ENCODE measurements at regions of chr5 and their contacts with region 1.

Region 1: GRCh38 chr5:172454358-172455086 is at the start of gene SH3PXD2B:
- DNase-seq: peak; percentile 62
- ATAC-seq: peak; percentile 64
- H3K4me3 Mint-ChIP-seq: peak within 1 kb of the TSS; percentile 69
- H3K27ac Mint-ChIP-seq: peak within 1 kb of the TSS; percentile 38
- H3K4me1 Mint-ChIP-seq: peaks cover 17% of the 10 kb centered on the region
- H3K27me3 Mint-ChIP-seq: peaks cover 20% of the 10 kb centered on the region
- total RNA-seq, gene SH3PXD2B: 1.3 to 1.8 TPM

Region 2: GRCh38 chr5:172361566-172362238 is 92.8 kb before region 1 on chr5:
- CTCF ChIA-PET with region 1: interaction called, 3 read pairs
- POLR2A ChIA-PET with region 1: no interaction called
- intact Hi-C with region 1: loop called in 1 of 2 experiments (anchors 5 kb)
- DNase-seq: peak; percentile 83
- ATAC-seq: peak; percentile 96
- H3K4me3 Mint-ChIP-seq: no peak overlapping the region
- H3K27ac Mint-ChIP-seq: peak overlapping the region; percentile 88
- H3K4me1 Mint-ChIP-seq: peaks cover 11% of the 10 kb centered on the region
- H3K27me3 Mint-ChIP-seq: peaks cover 2% of the 10 kb centered on the region

Region 3: DNA sequence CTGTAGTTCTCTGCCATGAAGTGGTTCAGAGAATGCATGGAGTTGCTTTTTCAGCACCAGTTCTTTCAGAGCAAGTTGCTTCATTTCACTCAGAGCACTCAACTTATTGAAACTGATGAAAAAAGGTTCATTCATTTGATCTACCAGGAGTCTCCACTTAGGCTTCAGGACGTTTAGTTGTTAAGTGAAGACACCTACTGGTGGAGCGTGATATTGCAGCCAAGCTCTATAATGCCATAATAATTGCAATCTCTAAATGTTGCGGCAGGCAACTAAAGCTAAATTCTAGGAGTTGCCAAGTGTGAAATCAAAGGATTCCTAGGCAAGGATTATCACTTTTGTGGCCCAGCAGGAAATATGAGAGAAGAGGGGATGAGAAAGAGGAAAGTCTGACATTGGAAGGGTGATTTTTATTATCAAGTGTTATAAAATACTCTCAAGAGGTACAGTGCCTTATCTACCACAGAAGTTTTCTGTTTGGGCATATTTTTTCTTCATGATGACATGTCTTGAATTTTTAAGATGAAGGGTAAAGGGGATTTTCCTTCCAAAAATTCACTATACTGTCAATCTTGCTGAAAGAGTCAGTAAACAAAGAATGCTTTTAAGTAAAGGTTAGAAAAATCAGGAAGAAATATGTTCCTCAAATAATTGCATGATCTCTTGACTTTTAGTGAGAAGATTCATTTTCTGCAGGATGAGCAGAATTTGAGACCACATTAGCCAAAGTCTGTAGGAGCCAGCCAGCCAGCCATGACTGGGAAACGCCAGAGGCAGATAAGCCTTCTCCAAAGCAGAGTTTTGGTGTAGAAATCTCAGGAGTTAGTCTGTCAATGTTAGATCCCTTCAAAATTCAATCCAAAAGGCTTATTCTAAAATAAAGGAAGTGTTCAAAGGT is 83.6 kb before region 1 on chr5:
- CTCF ChIA-PET with region 1: interaction called, 11 read pairs
- POLR2A ChIA-PET with region 1: no interaction called
- intact Hi-C with region 1: no loop called
- DNase-seq: peak; percentile 76
- ATAC-seq: peak; percentile 36
- H3K4me3 Mint-ChIP-seq: no peak overlapping the region
- H3K27ac Mint-ChIP-seq: no peak overlapping the region
- H3K4me1 Mint-ChIP-seq: no peaks in the 10 kb centered on the region
- H3K27me3 Mint-ChIP-seq: peaks cover 6% of the 10 kb centered on the region

Region 4: DNA sequence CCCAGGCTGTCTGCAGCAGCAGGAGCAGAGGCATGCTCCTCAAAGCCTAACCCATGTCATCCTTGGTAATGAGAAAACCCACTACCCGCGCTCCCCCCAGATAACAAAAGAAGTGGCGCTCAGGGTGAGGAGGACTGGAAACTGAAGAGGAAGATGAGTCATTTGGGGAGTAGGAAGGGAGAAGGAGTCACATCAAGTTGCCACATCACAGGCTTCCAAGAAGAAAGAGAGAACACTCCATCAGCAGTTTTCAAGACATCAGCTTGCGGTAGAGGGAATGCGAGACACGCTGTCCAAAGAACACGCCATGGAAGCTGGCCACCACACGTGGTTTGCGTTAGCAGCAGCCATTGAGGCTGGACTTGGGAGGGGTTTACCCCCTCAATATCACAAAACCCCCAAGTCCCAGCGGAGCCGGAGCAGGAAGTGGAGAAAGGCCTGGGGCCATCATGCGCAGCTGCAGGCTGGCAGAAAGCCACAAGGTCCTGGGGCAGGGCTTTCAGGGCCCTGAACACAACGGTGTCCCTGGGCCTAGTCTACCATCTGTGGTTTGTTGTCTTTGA is 41.7 kb before region 1 on chr5:
- CTCF ChIA-PET with region 1: interaction called, 6 read pairs
- POLR2A ChIA-PET with region 1: no interaction called
- intact Hi-C with region 1: loop called in 1 of 2 experiments (anchors 2 kb)
- DNase-seq: peak; percentile 46
- ATAC-seq: peak; percentile 20
- H3K4me3 Mint-ChIP-seq: no peak overlapping the region
- H3K27ac Mint-ChIP-seq: peak overlapping the region; percentile 45
- H3K4me1 Mint-ChIP-seq: peaks cover 33% of the 10 kb centered on the region
- H3K27me3 Mint-ChIP-seq: peaks cover 7% of the 10 kb centered on the region

Region 5: DNA sequence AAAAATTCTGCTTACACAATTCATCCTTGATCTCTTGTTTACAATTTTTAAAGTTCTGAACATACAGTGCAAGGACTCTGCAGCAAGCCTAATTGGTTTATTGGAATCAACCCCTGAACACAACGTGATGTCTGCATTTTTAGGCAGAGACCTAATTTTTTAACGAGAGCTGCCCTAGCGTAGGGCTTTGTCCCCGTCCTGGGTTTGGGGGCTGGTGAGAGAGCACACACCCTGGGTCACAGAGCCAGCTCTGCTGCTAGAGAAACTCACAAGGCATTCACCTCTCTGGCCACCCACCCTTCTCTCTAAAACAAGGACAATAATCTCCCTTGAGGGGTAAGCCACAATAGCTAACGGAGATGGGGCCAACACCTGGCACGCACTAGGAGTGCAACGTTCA is 28.4 kb before region 1 on chr5:
- CTCF ChIA-PET with region 1: interaction called, 11 read pairs
- POLR2A ChIA-PET with region 1: no interaction called
- intact Hi-C with region 1: no loop called
- DNase-seq: no peak
- ATAC-seq: no peak
- H3K4me3 Mint-ChIP-seq: no peak overlapping the region
- H3K27ac Mint-ChIP-seq: no peak overlapping the region
- H3K4me1 Mint-ChIP-seq: no peaks in the 10 kb centered on the region
- H3K27me3 Mint-ChIP-seq: peaks cover 4% of the 10 kb centered on the region

Region 6: DNA sequence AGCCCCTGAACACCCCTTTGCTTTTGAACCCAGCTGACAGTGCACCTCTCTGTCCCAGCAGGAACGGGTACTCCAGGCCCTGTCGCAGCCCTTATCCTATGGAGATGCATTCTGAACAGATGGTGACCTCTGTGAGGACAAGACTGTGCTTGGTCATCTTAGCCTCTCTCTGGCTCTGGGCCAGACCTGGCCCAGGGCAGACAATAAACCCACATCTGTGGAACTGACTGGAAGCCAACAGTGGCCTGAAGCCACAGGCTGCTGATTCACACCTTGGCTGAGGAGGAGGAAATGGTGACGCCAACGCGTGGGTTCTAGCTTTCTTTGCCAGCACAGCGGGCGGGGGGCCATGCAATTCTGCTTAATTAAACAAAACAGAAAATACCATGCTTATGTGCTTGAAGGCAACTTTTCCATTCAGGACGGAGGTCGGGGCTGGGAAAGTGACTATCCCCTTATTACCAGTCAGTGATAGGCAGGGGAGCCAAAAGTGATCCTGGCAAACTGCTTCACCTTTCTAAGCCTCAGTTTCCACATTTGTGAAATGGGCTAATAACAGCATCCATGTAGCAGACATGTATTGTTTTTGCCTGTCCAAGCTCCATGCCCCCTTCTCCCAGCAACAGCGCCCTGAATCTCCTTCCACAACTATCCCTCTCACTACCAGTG is 10.9 kb before region 1 on chr5:
- CTCF ChIA-PET with region 1: interaction called, 47 read pairs
- POLR2A ChIA-PET with region 1: interaction called, 4 read pairs
- intact Hi-C with region 1: no loop called
- DNase-seq: peak; percentile 89
- ATAC-seq: peak; percentile 89
- H3K4me3 Mint-ChIP-seq: no peak overlapping the region
- H3K27ac Mint-ChIP-seq: peak overlapping the region; percentile 52
- H3K4me1 Mint-ChIP-seq: peaks cover 14% of the 10 kb centered on the region
- H3K27me3 Mint-ChIP-seq: peaks cover 19% of the 10 kb centered on the region

Region 7: GRCh38 chr5:172502969-172503368 is 48.4 kb after region 1 on chr5:
- CTCF ChIA-PET with region 1: no interaction called
- POLR2A ChIA-PET with region 1: no interaction called
- intact Hi-C with region 1: no loop called
- DNase-seq: no peak
- ATAC-seq: no peak
- H3K4me3 Mint-ChIP-seq: no peak overlapping the region
- H3K27ac Mint-ChIP-seq: no peak overlapping the region
- H3K4me1 Mint-ChIP-seq: no peaks in the 10 kb centered on the region
- H3K27me3 Mint-ChIP-seq: peaks cover 4% of the 10 kb centered on the region

Region 8: GRCh38 chr5:172583931-172584511 is 129.5 kb after region 1 on chr5:
- CTCF ChIA-PET with region 1: no interaction called
- POLR2A ChIA-PET with region 1: no interaction called
- intact Hi-C with region 1: no loop called
- DNase-seq: no peak
- ATAC-seq: no peak
- H3K4me3 Mint-ChIP-seq: no peak overlapping the region
- H3K27ac Mint-ChIP-seq: no peak overlapping the region
- H3K4me1 Mint-ChIP-seq: no peaks in the 10 kb centered on the region
- H3K27me3 Mint-ChIP-seq: peaks cover 11% of the 10 kb centered on the region

Measured in activated CD4-positive, alpha-beta T cell treated with anti-CD3 and anti-CD28 coated beads for 36 hours (primary cell).